Activated T-helper 2 cell treated with anti-CD3 and anti-CD28 coated beads, Interferon-gamma antibody, Interleukin-2, Interleukin-4, amounts not matched to agents 10 μg/mL and 5 μg/mL and 100 μg/mL, durations not matched to agents 14 hours and 24 hours and 36 hours (primary cell): ENCODE measurements at regions of chr14 and their contacts with region 1.

Region 1: DNA sequence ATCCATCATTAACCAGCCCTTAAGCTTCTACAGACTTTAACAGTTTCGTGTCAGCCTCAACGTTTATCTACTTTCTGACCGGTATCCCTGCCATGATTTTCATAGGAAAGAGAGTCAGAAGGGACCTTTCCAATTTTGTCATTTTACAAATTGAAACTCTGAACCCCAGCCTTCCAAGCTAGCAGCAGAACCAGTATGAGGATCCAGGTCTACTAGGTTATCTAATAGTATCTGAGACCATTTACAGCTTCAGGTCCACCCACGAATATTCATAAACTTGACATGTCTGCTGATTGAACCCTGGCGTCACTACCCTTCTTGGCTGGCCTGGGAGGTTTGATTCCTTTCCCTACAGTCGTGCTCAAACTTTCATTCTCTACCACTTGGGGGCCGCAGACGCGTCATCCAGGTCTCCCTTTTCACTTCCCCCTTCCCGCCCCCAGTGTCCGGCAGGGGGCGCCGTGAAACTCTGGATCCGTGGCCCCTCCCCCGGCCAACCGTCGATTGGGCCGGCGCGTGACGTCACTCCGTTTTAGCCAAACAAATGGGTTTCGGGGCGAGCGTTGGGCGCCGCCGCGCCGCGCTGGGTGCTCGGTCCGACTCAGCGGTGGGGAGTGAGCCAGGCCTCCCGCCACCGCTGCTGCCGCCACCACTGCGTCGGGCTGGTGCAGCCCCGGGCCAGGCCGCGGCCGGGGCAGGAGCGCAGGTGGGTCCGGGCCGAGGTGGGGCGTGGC is at the start of gene FBXO34:
- DNase-seq: peak; percentile 99
- H3K4me3 Mint-ChIP-seq: peak within 1 kb of the TSS; percentile 86
- H3K27ac Mint-ChIP-seq: peak within 1 kb of the TSS; percentile 92
- H3K4me1 Mint-ChIP-seq: peaks cover 40% of the 10 kb centered on the region
- H3K27me3 Mint-ChIP-seq: no peaks in the 10 kb centered on the region
- total RNA-seq, gene FBXO34: 19.7 and 23.0 TPM in 2 replicates

Region 2: DNA sequence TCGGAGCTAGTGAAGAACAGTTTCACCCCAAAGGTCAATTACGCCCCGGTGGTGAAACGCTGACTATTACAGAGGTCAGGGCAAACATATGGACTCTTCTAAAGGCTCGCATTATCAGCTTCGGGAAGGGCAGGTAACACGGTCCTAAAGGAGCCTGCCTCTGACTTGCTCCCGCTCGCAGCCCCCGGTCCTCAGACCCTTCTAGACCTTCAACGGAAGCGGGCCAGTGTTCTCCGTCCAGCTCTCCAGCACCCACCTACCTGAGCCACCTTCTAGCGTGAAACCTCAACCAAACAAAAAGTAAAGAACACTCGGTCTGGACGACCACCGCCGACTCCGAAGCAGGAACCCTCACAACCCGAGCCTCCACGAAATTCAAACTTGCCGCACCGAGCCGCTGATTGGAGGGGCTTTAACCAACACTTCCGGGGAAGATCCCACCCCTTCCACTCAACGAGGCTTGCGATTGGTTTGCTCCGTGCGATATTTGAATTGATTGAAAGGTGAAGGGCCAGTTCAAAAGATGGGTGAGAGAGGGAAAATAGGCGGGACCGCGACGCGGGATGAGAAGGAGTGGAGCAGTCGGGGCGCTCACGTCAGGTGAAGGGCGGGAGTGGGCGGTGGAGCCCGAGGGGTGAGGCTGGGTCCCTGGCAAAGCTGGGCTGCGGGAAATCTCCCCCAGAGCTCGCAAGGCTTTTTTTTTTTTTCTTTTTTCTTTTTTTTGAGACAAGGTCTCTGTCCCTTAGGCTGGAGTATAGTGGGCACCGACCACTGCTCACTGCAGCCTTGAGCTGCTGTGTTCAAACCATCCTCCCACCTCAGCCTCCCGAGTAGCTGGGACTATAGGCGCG is 79.6 kb before region 1 on chr14 and contains the start of gene DLGAP5:
- intact Hi-C with region 1: loop called (anchors 2 kb)
- DNase-seq: peak; percentile 93
- H3K4me3 Mint-ChIP-seq: peak within 1 kb of the TSS; percentile 95
- H3K27ac Mint-ChIP-seq: peak within 1 kb of the TSS; percentile 88
- H3K4me1 Mint-ChIP-seq: peaks cover 35% of the 10 kb centered on the region
- H3K27me3 Mint-ChIP-seq: peaks cover 4% of the 10 kb centered on the region
- total RNA-seq, gene DLGAP5: 41.9 and 46.0 TPM in 2 replicates

Region 3: GRCh38 chr14:55206175-55206693 is 64.8 kb before region 1 on chr14:
- intact Hi-C with region 1: no loop called
- DNase-seq: no peak
- H3K4me3 Mint-ChIP-seq: no peak overlapping the region
- H3K27ac Mint-ChIP-seq: no peak overlapping the region
- H3K4me1 Mint-ChIP-seq: no peaks in the 10 kb centered on the region
- H3K27me3 Mint-ChIP-seq: peaks cover 21% of the 10 kb centered on the region

Region 4: GRCh38 chr14:55285048-55285652 is 14.2 kb after region 1 on chr14:
- intact Hi-C with region 1: no loop called
- DNase-seq: no peak
- H3K4me3 Mint-ChIP-seq: no peak overlapping the region
- H3K27ac Mint-ChIP-seq: no peak overlapping the region
- H3K4me1 Mint-ChIP-seq: peaks cover 21% of the 10 kb centered on the region
- H3K27me3 Mint-ChIP-seq: no peaks in the 10 kb centered on the region

Region 5: GRCh38 chr14:55333711-55334485 is 62.9 kb after region 1 on chr14:
- intact Hi-C with region 1: loop called (anchors 2 kb)
- DNase-seq: no peak
- H3K4me3 Mint-ChIP-seq: peak overlapping the region; percentile 60
- H3K27ac Mint-ChIP-seq: peak overlapping the region; percentile 87
- H3K4me1 Mint-ChIP-seq: peaks cover 71% of the 10 kb centered on the region
- H3K27me3 Mint-ChIP-seq: no peaks in the 10 kb centered on the region

Region 6: GRCh38 chr14:55373784-55374705 is 103.0 kb after region 1 on chr14:
- intact Hi-C with region 1: loop called (anchors 1 kb)
- DNase-seq: peak; percentile 22
- H3K4me3 Mint-ChIP-seq: peak overlapping the region; percentile 44
- H3K27ac Mint-ChIP-seq: peak overlapping the region; percentile 95
- H3K4me1 Mint-ChIP-seq: peaks cover 25% of the 10 kb centered on the region
- H3K27me3 Mint-ChIP-seq: no peaks in the 10 kb centered on the region

Region 7: DNA sequence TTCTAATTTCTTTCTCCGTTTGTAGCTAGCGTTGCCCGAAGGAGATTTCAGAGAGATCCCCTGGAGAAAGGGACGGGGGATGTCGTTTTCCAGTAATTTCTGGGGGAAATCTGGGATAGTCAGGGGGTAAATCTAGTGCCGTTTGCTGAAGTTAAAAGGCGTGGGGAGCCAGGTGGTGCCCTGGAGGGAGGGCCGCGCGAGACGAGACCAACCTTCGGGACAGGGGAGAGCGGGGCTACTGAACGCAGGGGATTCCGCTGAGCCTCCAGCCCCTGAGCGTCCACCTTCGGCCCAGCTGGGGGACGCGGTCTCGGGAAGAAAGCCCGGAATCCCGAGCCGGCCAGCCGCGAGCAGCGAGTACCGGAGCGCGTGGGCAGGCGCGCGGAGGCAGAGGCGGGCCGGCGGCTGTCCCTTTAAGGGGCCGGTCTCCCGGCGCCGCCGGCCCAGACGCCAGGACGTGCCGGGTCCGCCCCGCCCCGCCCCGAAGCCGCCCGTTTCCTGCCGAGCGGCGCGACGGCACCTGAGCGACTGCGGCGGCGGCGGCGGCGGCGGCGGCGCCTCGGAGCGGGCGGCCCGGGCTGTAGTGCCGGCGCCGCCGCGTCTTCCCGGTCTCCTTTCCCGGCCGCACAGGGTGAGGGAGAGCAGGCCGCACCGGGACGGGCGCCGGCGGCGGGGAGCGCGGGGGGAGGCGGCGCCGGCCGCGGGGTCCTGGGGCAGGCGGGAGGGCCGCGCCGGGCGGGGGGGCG is 308.9 kb after region 1 on chr14 and contains the start of gene KTN1:
- intact Hi-C with region 1: loop called (anchors 10 kb)
- DNase-seq: peak; percentile 80
- H3K4me3 Mint-ChIP-seq: peak within 1 kb of the TSS; percentile 90
- H3K27ac Mint-ChIP-seq: peak within 1 kb of the TSS; percentile 86
- H3K4me1 Mint-ChIP-seq: peaks cover 33% of the 10 kb centered on the region
- H3K27me3 Mint-ChIP-seq: no peaks in the 10 kb centered on the region
- total RNA-seq, gene KTN1: 135 and 137 TPM in 2 replicates